ENCODE measurements at regions of chr10 and their contacts with region 1.

Region 1: DNA sequence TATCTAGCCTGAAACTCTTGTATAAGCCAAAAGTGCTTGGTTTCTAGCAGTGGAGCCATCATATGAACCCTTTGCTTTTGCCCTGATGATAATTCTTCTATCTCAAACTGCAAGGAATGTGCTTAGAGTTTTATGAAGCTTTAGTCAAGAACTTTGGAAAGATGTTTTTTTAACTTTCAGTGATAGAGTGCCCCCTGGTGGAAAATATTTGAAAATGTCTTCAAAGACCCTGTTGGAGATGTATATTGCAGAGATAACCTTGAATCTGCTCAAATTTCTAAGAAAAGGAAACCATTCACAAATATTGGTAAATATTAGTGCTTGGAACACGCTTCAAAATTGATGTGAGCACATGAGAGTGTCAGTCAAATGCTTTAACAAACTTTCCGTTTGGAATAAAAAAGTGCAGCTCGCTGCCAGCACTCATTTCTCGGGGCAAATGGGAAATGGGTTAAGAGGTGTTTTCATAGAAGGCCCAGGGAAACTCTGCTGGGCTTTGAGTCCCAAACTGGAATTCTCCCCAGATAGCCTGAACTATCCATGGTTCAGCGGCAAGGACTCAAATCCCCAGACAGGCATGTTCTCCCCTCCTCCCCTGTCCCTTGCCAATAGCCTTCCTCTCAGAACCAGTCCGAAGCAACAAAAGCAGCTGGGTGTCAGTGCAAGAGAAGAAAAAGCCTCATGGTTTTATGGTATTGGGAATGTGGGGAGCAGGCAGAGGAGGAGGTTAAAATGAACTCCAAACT is 129.3 kb downstream of the MYOF start:
- DNase-seq: peak; percentile 44
- H3K4me3 ChIP-seq: no peak overlapping the region
- H3K27ac ChIP-seq: no peak overlapping the region
- H3K4me1 ChIP-seq: no peaks in the 10 kb centered on the region
- H3K27me3 ChIP-seq: no peaks in the 10 kb centered on the region
- CTCF ChIP-seq: peak; percentile 83
- EP300 ChIP-seq: no peak
- RAD21 ChIP-seq: peak; percentile 68

Region 2: DNA sequence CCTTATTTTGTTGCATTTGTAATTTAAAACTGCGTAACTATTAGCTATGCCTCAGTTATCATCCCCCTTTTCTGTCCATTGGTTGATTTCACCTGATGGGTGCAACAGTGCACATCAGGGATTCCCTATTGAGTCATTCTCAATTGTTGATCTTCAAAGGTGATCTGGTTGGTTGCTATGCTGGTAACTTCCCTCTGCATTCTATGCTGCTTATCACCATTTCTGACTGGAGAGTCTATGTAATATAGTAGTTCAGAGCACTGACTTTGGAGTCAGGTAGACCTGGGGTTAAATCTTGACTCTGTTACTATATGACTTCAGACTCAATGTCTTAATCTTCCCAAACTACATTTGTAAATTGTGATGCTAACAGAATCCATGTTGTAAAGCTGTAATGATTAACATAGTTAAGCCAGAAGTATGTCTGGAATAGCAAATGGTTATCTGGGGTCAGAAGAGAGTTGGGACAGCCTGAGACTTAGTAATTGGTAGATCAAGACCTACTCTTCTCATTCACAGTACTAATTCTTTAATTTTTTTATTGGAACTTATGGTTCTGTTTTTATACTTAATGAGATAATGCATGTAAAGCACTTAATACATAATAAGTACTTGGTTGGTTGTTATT is 466.4 kb before region 1 on chr10:
- CTCF ChIA-PET with region 1: interaction called, 12 read pairs
- POLR2A ChIA-PET with region 1: no interaction called
- DNase-seq: no peak
- H3K4me3 ChIP-seq: no peak overlapping the region
- H3K27ac ChIP-seq: no peak overlapping the region
- H3K4me1 ChIP-seq: no peaks in the 10 kb centered on the region
- H3K27me3 ChIP-seq: no peaks in the 10 kb centered on the region
- CTCF ChIP-seq: no peak
- EP300 ChIP-seq: no peak
- RAD21 ChIP-seq: no peak

Region 3: GRCh38 chr10:93006435-93007039 is 346.3 kb before region 1 on chr10:
- CTCF ChIA-PET with region 1: interaction called, 15 read pairs
- POLR2A ChIA-PET with region 1: no interaction called
- DNase-seq: peak; percentile 30
- H3K4me3 ChIP-seq: no peak overlapping the region
- H3K27ac ChIP-seq: no peak overlapping the region
- H3K4me1 ChIP-seq: no peaks in the 10 kb centered on the region
- H3K27me3 ChIP-seq: no peaks in the 10 kb centered on the region
- CTCF ChIP-seq: peak; percentile 80
- EP300 ChIP-seq: no peak
- RAD21 ChIP-seq: peak; percentile 75

Region 4: GRCh38 chr10:93074147-93074596 is 278.6 kb before region 1 on chr10:
- CTCF ChIA-PET with region 1: interaction called, 33 read pairs
- POLR2A ChIA-PET with region 1: no interaction called
- DNase-seq: peak; percentile 71
- H3K4me3 ChIP-seq: peak overlapping the region; percentile 46 to 52
- H3K27ac ChIP-seq: no peak overlapping the region
- H3K4me1 ChIP-seq: peaks cover 0 to 37% of the 10 kb centered on the region in 2 experiments; a peak in 1 of 4 replicates
- H3K27me3 ChIP-seq: peaks cover 45% of the 10 kb centered on the region
- CTCF ChIP-seq: no peak; the same call in 1 of the 2 replicates
- EP300 ChIP-seq: no peak
- RAD21 ChIP-seq: no peak

Region 5: DNA sequence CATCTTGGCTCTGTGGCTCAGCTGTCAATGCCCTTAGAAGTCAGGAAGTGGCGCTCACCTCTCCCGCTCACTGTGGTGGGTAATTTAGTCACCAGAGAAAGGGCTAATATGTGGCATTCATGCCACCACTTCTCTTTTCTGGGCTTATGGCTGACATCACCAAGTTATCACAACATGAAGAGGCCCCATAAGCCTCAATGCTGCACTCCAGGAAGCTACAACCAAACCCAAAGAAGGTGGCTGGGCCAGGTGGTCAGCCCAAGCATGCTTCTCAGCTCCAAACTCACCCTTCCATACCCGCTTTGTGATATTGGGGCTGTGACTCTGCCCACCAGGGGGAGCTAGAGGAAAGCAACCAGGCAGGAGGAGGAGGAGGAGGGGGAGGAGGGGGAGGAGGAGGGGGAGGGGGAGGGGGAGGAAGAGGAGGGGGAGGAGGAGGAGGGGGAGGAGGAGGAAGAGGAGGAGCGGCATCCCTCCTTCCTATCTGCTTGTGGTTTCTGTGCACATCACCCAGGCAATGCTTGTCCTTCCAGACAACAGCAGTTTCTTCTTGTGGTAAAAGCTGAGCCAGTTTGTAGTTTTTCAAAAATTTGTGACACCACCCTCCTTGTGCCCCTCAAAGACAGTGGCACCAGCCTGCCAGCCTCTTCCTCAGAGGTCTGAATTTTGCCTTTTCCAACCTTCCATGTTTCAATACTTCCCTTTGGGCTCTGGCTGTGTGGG is 237.0 kb before region 1 on chr10:
- CTCF ChIA-PET with region 1: interaction called, 27 read pairs
- POLR2A ChIA-PET with region 1: no interaction called
- DNase-seq: peak; percentile 69
- H3K4me3 ChIP-seq: no peak overlapping the region
- H3K27ac ChIP-seq: no peak overlapping the region
- H3K4me1 ChIP-seq: no peaks in the 10 kb centered on the region
- H3K27me3 ChIP-seq: no peaks in the 10 kb centered on the region; the same call in 1 of the 2 replicates
- CTCF ChIP-seq: peak; percentile 43
- EP300 ChIP-seq: no peak
- RAD21 ChIP-seq: peak; percentile 49

Region 6: DNA sequence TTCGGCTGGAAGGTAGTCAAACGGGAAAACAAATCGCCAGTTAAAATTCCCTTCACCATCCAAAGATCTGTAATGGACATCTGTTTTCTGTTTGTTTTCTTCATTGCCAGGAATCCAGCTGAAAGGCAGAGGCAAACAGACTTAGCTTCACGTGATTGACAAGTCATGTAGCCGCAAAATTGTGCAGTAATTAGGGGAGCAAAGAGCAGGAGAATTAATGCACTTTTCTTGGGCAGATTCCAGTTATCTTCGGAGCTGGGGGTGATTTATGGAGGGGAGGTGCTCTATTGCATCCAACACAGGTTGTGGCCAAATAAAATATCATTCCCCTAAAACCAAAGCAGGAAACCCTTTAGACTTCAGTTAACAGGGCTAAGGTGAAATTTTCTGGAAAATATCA is 32.9 kb before region 1 on chr10:
- CTCF ChIA-PET with region 1: interaction called, 11 read pairs
- POLR2A ChIA-PET with region 1: no interaction called
- DNase-seq: peak; percentile 45
- H3K4me3 ChIP-seq: no peak overlapping the region
- H3K27ac ChIP-seq: 0 out of 4 replicates have a peak overlapping the region, but pooled peaks of 1 of the 2 experiments have one; percentile 11
- H3K4me1 ChIP-seq: peaks cover 0 to 11% of the 10 kb centered on the region in 2 experiments; a peak in 1 of 4 replicates
- H3K27me3 ChIP-seq: no peaks in the 10 kb centered on the region
- CTCF ChIP-seq: no peak
- EP300 ChIP-seq: peak in 1 of 2 experiments; percentile 52; a peak in 2 of 4 replicates
- RAD21 ChIP-seq: no peak

Region 7: DNA sequence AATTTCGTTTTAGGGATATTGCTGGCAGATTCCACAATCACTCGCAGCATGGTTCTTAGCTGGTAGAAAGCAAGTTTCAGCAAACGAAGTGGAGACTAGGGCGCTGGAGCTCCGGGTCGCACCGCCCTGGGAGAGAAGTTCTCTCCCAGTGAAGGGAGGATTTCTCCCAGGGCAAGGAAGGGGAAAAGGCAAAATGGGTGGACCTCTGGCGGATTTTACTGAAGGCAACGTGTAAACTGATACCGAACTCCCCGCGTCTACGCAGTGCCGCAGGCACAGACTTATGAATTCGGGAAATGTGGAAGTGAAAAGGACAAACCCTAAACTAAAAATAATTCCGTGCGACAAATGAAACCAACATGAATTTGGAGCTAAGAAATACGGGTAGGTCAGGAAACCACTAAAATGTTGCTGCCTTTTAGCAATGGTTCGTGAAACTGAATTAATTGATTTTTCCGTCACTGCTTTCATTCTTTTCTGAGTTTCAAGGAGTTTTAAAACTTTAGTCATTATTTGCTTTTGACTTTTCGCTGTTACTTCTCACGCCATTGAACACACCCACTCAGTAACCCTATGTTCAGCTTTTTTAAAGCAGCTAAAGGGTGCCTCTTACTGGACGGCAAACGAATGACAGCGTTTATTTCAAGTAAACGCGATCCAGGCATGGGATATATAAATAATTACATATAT is 129.5 kb after region 1 on chr10 and contains the start of gene MYOF:
- CTCF ChIA-PET with region 1: interaction called, 18 read pairs
- POLR2A ChIA-PET with region 1: no interaction called
- DNase-seq: peak; percentile 65
- H3K4me3 ChIP-seq: peak within 1 kb of the TSS; percentile 59 to 62
- H3K27ac ChIP-seq: peak within 1 kb of the TSS; percentile 78 to 98
- H3K4me1 ChIP-seq: no peaks in the 10 kb centered on the region; a peak in 1 of 4 replicates
- H3K27me3 ChIP-seq: no peaks in the 10 kb centered on the region
- CTCF ChIP-seq: peak; percentile 65
- EP300 ChIP-seq: no peak
- RAD21 ChIP-seq: peak; percentile 91
- polyA plus RNA-seq, gene MYOF: 103 and 134 TPM in 2 replicates

Region 8: DNA sequence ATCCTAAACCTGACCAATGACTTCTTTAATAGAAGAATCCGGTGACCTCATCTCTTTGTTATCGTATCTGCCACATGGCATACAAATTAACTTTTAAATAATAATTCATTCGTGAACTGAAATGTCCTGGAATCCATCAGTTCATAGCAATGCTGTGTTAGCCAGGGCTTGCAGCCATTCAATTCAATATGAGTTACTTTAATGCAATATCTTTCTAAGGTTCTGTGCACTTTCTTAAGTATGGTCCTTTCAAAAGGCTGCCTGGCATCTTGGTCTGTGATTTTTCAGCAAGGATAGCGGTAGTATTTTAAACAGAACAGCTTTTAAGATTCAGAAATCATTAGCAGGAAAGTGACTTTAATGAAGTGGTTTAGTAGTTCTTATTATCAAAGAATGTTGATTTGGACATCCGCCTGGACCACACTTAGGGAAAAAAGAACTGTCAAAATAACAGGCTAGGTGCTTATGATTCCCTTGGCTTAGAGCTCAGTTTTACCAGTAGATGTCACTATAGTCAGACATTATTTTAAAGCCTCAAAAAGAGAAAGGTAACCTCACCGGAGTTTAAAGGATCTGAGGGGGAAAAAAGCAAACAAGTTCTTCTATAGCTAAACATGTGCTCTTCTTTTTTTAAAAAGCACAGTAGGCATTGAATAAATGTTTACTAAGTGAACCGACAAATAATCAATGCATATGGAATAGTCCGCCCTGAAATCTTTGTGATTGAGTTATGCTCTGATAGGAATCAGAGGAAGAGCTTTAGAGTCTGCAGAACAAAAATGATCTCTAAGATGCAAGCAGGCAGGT is 563.6 kb after region 1 on chr10:
- CTCF ChIA-PET with region 1: no interaction called
- POLR2A ChIA-PET with region 1: no interaction called
- DNase-seq: peak; percentile 34
- H3K4me3 ChIP-seq: no peak overlapping the region
- H3K27ac ChIP-seq: no peak overlapping the region
- H3K4me1 ChIP-seq: peaks cover 0 to 3% of the 10 kb centered on the region in 2 experiments; a peak in 1 of 4 replicates
- H3K27me3 ChIP-seq: no peaks in the 10 kb centered on the region
- CTCF ChIP-seq: peak; percentile 81
- EP300 ChIP-seq: no peak
- RAD21 ChIP-seq: peak; percentile 80